Activated CD4-positive, alpha-beta T cell treated with anti-CD3 and anti-CD28 coated beads for 36 hours (primary cell): ENCODE measurements at regions of chr17 and their contacts with region 1.

Region 1: GRCh38 chr17:58082870-58083490 is at the start of gene DYNLL2:
- DNase-seq: peak; percentile 95
- ATAC-seq: peak; percentile 89
- H3K4me3 Mint-ChIP-seq: peak within 1 kb of the TSS; percentile 83
- H3K27ac Mint-ChIP-seq: peak within 1 kb of the TSS; percentile 79
- H3K4me1 Mint-ChIP-seq: peaks cover 35% of the 10 kb centered on the region
- H3K27me3 Mint-ChIP-seq: no peaks in the 10 kb centered on the region
- total RNA-seq, gene DYNLL2: 21.3 to 28.3 TPM

Region 2: DNA sequence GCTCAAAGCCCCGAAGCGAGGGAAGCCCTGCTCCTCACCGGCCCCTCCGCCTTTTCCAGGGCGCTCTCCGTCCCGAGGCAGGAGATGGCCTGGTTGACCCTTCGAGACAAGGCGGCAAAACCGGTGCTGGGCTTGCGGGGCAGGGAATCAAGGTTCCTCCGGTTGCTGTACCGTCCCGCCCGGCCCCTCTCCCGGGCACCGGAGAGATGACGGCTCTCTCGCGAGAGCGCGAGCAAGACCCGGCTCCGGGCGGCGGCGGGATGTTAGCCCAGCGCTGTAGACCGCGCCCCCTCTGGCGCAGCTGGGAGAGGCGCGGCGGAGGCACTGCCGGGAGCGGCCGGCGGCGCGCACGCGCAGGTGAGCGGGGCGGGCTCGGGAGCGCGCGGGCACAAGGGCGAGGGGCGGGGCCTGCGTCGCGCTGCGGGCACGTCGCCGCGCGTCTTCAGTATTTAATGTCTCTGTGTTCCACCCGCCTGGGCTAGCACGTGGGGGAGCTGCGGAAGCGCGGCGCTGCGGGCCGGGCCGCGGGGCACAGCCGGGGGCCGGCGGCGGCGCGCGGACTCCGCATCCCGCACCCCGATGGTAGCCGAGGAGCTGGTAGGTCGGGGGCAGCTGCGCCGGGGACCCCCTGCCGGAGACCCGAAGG is 998.1 kb before region 1 on chr17 and contains the start of gene AKAP1:
- CTCF ChIA-PET with region 1: no interaction called
- POLR2A ChIA-PET with region 1: no interaction called
- intact Hi-C with region 1: loop called in 1 of 2 experiments (anchors 2 kb)
- DNase-seq: peak; percentile 97
- ATAC-seq: peak; percentile 96
- H3K4me3 Mint-ChIP-seq: peak within 1 kb of the TSS; percentile 81
- H3K27ac Mint-ChIP-seq: peak within 1 kb of the TSS; percentile 87
- H3K4me1 Mint-ChIP-seq: peaks cover 44% of the 10 kb centered on the region
- H3K27me3 Mint-ChIP-seq: no peaks in the 10 kb centered on the region
- total RNA-seq, gene AKAP1: 27.0 to 29.8 TPM

Region 3: GRCh38 chr17:57440522-57441485 is 642.2 kb before region 1 on chr17:
- CTCF ChIA-PET with region 1: no interaction called
- POLR2A ChIA-PET with region 1: no interaction called
- intact Hi-C with region 1: loop called in 1 of 2 experiments (anchors 1 kb)
- DNase-seq: peak; percentile 93
- ATAC-seq: peak; percentile 86
- H3K4me3 Mint-ChIP-seq: peak overlapping the region; percentile 38
- H3K27ac Mint-ChIP-seq: peak overlapping the region; percentile 95
- H3K4me1 Mint-ChIP-seq: peaks cover 85% of the 10 kb centered on the region
- H3K27me3 Mint-ChIP-seq: no peaks in the 10 kb centered on the region

Region 4: GRCh38 chr17:57995076-57995956 is 87.7 kb before region 1 on chr17:
- CTCF ChIA-PET with region 1: interaction called, 9 read pairs
- POLR2A ChIA-PET with region 1: interaction called, 3 read pairs
- intact Hi-C with region 1: loop called in 1 of 2 experiments (anchors 2 kb)
- DNase-seq: peak; percentile 77
- ATAC-seq: peak; percentile 82
- H3K4me3 Mint-ChIP-seq: no peak overlapping the region
- H3K27ac Mint-ChIP-seq: peak overlapping the region; percentile 21
- H3K4me1 Mint-ChIP-seq: peaks cover 68% of the 10 kb centered on the region
- H3K27me3 Mint-ChIP-seq: no peaks in the 10 kb centered on the region

Region 5: GRCh38 chr17:58337600-58338453 is 254.8 kb after region 1 on chr17:
- CTCF ChIA-PET with region 1: no interaction called
- POLR2A ChIA-PET with region 1: no interaction called
- intact Hi-C with region 1: loop called in 1 of 2 experiments (anchors 5 kb)
- DNase-seq: peak; percentile 97
- ATAC-seq: peak; percentile 57
- H3K4me3 Mint-ChIP-seq: peak overlapping the region; percentile 100
- H3K27ac Mint-ChIP-seq: peak overlapping the region; percentile 99
- H3K4me1 Mint-ChIP-seq: peaks cover 26% of the 10 kb centered on the region
- H3K27me3 Mint-ChIP-seq: no peaks in the 10 kb centered on the region